ENCODE measurements at regions of chr1 and their contacts with region 1.

Region 1: DNA sequence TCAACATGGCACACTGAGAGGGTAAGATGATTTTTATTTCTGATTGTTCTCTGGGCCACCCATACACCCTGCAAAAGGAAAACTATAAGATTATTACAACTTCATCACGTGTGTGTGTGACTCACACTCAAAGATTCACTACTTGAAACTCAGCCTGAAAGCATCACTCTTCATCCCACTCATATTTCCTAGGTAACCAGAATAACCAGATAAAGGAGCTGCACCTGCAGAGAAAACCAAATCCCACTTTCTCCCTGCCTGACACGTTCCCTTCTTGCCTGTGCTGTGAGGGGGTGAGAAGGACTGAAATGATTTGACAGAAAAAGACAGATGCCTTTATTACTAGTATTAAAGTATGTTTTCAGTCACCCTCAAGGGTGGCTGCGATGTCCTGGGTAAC is 131.6 kb downstream of the TGFBR3 start:
- DNase-seq: no peak
- H3K4me3 Mint-ChIP-seq: no peak overlapping the region
- H3K27ac Mint-ChIP-seq: peak overlapping the region; percentile 67
- H3K4me1 Mint-ChIP-seq: peaks cover 46% of the 10 kb centered on the region
- H3K27me3 Mint-ChIP-seq: peaks cover 6% of the 10 kb centered on the region

Region 2: GRCh38 chr1:91500756-91501522 is 253.4 kb before region 1 on chr1 and contains the start of gene CDC7:
- intact Hi-C with region 1: loop called (anchors 2 kb)
- DNase-seq: peak; percentile 81
- H3K4me3 Mint-ChIP-seq: no peak within 1 kb of the TSS
- H3K27ac Mint-ChIP-seq: no peak within 1 kb of the TSS
- H3K4me1 Mint-ChIP-seq: peaks cover 34% of the 10 kb centered on the region
- H3K27me3 Mint-ChIP-seq: no peaks in the 10 kb centered on the region
- total RNA-seq, gene CDC7: 19.9 and 23.1 TPM in 2 replicates

Region 3: DNA sequence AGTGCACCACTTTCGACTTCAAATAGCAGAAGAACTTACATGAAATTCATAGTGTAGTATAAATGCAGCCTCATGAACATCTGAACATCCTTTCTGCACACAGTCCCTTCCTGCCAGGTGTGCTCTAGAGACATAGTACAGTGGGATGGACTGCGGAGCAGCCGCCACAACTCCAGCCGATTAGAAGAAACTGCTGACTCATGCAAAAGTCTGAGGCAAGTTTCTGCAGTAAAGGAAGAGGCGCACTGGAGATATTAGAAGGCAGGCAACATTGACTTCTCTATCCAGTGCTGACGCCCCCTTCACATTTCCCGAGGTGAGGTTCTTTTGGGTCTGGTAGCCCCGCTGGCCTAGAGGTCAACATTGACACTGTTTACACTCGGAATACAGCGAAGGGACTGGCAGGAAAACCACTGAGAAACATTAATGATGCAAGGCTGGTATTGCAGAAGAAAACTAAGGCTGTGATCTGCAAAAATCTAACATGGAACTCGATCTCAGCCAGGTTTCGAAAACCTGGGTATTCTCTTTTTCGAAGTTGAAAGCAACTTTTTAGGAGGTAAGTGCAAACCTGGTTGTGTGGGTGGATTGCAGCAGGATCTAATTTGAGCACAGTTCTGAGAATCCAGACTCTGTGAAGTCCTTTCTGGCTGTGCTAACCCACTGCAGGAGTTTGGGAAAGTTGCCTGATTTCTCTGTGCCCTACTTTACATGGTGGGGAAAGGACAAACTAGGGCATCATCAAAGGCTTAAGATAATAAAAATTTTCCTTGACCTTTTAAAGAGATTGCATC is 163.0 kb before region 1 on chr1:
- intact Hi-C with region 1: loop called (anchors 2 kb)
- DNase-seq: no peak
- H3K4me3 Mint-ChIP-seq: peak overlapping the region; percentile 73
- H3K27ac Mint-ChIP-seq: peak overlapping the region; percentile 79
- H3K4me1 Mint-ChIP-seq: peaks cover 40% of the 10 kb centered on the region
- H3K27me3 Mint-ChIP-seq: peaks cover 4% of the 10 kb centered on the region

Region 4: GRCh38 chr1:91697416-91697815 is 56.9 kb before region 1 on chr1:
- intact Hi-C with region 1: loop called (anchors 1 kb)
- DNase-seq: peak; percentile 69
- H3K4me3 Mint-ChIP-seq: peak overlapping the region; percentile 72
- H3K27ac Mint-ChIP-seq: peak overlapping the region; percentile 86
- H3K4me1 Mint-ChIP-seq: peaks cover 41% of the 10 kb centered on the region
- H3K27me3 Mint-ChIP-seq: peaks cover 1% of the 10 kb centered on the region

Region 5: DNA sequence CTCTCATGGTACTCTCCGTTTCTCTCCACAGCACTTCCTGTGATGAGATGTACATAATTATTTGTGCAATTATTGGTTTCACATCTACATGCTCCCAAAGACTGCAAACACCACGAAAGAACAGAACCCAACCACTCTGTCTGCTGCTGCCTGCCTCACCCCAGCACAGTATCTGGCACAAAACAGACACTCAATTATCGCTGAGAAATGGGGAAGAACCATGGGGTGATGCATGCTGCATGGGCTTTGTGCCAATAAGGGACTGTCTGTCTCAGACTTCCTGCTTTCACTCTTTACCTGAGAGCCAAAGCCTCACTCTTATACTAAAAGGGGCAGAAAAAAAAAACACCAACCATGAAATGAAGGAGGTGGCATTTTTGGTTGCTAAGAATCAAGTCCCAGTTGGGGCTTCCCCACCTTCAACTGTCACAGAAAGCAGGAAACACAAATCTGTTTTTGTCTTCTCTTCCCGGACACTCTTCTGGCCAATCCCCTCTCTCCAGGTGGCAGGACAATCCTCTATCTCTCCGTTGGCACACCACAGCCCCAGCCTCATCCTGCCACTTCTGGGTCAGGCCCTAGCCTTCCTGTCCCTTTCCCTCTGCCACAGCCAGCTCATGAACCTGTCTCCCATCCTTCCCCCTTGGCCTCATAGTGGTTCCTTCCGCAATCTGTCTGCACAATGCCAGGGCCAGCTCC is 49.6 kb after region 1 on chr1:
- intact Hi-C with region 1: loop called (anchors 1 kb)
- DNase-seq: peak; percentile 70
- H3K4me3 Mint-ChIP-seq: peak overlapping the region; percentile 72
- H3K27ac Mint-ChIP-seq: peak overlapping the region; percentile 93
- H3K4me1 Mint-ChIP-seq: peaks cover 68% of the 10 kb centered on the region
- H3K27me3 Mint-ChIP-seq: peaks cover 6% of the 10 kb centered on the region

Region 6: DNA sequence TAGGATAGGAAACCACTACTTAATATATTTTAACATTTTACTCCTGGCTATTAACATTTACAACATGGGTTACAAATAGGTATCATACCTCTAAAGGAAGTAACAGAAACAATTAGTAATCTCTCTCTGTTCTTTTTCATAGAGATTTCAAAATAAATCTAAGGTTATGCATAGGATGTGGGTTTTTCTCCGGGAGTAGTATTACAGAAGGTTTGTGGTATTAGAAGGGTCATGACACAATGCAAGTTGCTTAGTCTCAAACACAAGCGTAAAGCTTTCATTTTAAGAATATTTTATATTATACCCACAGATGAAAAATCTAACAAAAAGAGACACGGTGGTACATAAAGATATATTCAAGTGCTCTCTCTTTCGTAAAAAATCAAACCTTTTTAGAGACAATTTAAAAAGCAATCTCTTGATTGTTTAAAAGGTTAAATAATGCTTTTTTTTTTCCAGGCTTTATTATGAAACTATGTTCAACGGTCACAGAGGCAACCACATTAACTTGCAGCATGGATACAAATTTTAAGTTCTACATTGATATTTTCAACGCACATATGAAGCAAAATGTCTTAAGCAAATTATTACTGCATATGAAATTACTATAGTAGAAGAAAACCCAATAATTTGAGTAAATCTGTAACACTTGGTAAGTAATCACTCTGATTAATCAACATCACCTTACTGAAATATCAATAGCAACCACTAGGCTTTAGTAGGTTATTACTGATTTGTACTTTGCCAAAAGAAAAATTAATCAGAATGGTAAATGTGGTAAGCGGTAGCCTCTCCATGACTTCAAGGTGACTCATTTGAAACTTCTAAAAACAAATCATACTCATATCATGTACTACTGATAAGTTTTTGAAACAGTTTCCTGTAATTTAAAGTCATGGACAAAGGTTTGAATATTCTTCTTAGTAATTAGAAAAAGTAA is 829.7 kb after region 1 on chr1:
- intact Hi-C with region 1: loop called (anchors 2 kb)
- DNase-seq: no peak
- H3K4me3 Mint-ChIP-seq: peak overlapping the region; percentile 62
- H3K27ac Mint-ChIP-seq: peak overlapping the region; percentile 91
- H3K4me1 Mint-ChIP-seq: peaks cover 75% of the 10 kb centered on the region
- H3K27me3 Mint-ChIP-seq: no peaks in the 10 kb centered on the region